OCI-LY7 (cell line): ENCODE measurements at regions of chr10 and their contacts with region 1.

Region 1: GRCh38 chr10:123132576-123133477 is 2.9 kb upstream of the HMX3 start:
- DNase-seq: peak; percentile 45
- H3K4me3 ChIP-seq: no peak overlapping the region
- H3K27ac ChIP-seq: no peak overlapping the region
- H3K4me1 ChIP-seq: no peaks in the 10 kb centered on the region
- CTCF ChIP-seq: peak; percentile 84

Region 2: GRCh38 chr10:122142641-122143237 is 990.1 kb before region 1 on chr10:
- CTCF ChIA-PET with region 1: no interaction called
- POLR2A ChIA-PET with region 1: no interaction called
- intact Hi-C with region 1: no loop called
- DNase-seq: peak; percentile 15
- H3K4me3 ChIP-seq: no peak overlapping the region
- H3K27ac ChIP-seq: no peak overlapping the region
- H3K4me1 ChIP-seq: no peaks in the 10 kb centered on the region
- CTCF ChIP-seq: peak; percentile 88

Region 3: DNA sequence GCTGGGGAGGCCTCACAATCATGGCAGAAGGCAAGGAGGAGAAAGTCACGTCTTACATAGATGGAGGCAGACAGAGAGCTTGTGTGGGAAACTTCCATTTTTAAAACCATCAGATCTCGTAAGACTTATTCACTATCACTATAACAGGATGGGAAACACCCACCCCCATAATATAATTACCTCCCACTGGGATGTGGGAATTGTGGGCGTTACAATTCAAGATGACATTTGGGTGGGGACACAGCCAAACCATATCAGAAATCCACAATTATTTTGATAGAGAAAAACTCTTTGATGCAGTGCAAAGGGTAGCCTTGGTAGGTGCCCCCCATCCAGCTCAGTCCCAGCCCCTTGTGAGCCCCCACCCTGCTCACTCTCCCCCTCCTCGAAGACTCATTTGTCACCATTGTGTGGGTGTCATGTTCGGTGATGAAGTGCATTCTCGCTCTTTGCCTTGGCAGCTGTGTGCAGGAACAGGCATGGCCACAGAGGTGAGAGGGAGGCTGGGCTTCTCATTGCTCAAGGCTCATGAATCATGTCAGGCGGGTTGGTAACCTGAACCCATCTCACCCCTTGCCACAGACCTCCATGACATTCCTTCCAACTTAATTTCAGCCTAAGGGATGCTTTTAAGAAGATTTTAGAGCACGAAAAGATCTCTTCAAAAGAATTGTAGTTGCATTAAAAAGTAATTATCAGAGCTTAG is 97.3 kb after region 1 on chr10:
- CTCF ChIA-PET with region 1: no interaction called
- POLR2A ChIA-PET with region 1: no interaction called
- intact Hi-C with region 1: no loop called
- DNase-seq: no peak
- H3K4me3 ChIP-seq: no peak overlapping the region
- H3K27ac ChIP-seq: no peak overlapping the region
- H3K4me1 ChIP-seq: no peaks in the 10 kb centered on the region
- CTCF ChIP-seq: no peak

Region 4: DNA sequence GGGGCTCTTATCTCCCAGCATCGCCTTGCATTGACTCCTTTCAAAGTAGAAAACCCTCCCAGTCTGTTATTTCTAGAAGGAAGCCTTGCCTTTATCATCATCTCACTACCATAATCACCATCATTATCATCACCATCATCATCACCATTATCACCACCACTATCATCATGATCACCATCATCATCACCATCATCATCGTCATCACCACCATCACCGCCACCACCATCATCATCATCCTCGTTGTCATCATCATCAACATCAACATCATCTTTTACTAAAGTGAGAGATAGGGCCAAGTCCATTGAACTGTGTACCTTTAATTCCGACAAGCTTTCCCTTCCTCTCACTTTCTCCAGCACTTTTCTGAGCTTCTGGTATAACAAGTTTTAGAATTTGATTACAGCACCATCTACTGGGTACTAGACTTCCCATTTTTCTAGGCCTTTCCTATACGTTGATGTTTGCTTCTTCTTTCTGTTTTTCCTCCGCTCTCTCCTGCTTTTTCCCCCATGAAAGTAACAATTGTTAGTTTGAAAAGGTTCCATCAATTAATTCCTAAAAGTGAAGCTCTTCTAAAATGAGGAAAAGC is 247.8 kb after region 1 on chr10:
- CTCF ChIA-PET with region 1: no interaction called
- POLR2A ChIA-PET with region 1: no interaction called
- intact Hi-C with region 1: loop called (anchors 2 kb)
- DNase-seq: no peak
- H3K4me3 ChIP-seq: no peak overlapping the region
- H3K27ac ChIP-seq: no peak overlapping the region
- H3K4me1 ChIP-seq: no peaks in the 10 kb centered on the region
- CTCF ChIP-seq: peak; percentile 52

Region 5: DNA sequence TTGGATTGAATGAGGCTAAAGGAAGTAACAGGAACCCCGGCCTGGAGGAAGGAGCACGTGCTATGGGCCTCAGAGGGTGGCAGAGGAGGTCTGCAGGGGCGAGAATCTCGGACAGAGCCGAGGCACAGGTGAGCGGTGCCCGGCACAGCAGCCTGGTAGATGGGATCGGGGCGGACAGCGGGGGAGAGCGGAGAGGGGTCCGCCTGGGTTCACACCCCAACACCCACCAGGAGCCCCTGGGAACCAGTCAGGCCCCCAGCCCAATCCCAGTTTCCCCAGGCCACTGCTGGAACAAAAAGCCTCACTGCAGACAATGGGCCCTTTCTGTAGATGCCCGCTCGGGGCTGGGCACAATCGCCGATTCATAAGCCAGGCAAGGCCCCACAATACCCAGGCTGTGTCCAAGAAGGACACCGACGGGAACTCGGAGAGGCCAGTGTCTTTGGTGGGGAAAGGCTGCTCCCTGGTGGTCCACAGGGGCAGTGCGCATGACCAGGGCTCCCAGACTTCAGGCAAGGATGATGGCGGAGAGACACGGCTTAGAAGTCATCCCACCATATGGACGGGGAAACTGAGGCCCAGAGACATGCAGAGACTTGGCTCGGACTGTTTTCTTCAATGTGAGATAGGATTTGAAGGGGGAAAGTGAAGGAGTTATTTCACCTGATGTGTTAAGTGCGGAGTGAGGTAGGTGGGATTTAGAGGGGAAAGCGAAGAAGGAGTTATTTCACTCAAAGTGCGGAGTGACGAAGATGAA is 426.4 kb after region 1 on chr10:
- CTCF ChIA-PET with region 1: interaction called, 4 read pairs
- POLR2A ChIA-PET with region 1: no interaction called
- intact Hi-C with region 1: loop called (anchors 2 kb)
- DNase-seq: peak; percentile 57
- H3K4me3 ChIP-seq: no peak overlapping the region
- H3K27ac ChIP-seq: no peak overlapping the region
- H3K4me1 ChIP-seq: no peaks in the 10 kb centered on the region
- CTCF ChIP-seq: peak; percentile 98

Region 6: DNA sequence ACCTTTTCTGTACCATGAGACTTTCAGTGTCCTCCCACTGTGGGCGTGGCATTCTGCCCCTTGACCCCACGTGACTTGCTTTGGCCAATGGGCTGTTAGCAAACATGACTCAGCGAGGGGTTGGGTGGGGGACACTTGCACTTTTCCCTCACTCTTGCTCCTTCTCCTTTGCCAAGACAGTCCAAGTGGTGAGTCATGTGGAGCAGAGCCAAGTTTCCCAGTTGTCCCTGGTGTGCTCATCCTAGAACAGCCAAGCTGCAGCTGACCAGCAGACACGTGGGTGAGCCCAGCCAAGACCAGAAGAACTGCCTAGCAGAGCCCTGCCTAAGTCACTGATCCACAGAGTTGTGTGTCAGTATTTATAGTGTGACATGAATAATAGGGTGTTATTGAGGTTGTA is 841.6 kb after region 1 on chr10:
- CTCF ChIA-PET with region 1: no interaction called
- POLR2A ChIA-PET with region 1: no interaction called
- intact Hi-C with region 1: loop called (anchors 10 kb)
- DNase-seq: peak; percentile 24
- H3K4me3 ChIP-seq: no peak overlapping the region
- H3K27ac ChIP-seq: no peak overlapping the region
- H3K4me1 ChIP-seq: no peaks in the 10 kb centered on the region
- CTCF ChIP-seq: no peak